T-cell (primary cell): ENCODE measurements at regions of chr6 and their contacts with region 1.

Region 1: DNA sequence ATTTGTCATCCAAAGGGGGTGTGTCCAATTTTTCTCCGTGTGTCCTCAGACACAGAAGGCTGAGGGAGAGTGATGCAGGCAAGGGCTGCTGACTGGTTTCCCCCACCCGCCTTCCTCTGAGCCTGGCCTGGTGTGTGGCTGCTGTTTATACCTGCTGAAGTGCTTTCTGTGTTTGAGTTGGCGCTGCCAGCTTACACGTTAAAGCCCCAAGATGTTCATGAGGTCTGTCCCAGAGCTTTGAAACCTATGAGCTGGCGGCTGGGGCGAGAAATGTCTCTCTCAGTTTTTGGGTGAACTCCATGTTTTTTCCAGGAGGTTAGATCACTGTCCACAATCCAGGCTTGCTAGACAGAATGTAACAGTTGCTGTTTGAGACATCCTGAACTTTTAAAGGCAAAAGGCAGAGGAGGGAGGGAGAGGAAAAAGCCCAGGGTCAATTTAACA is 69.0 kb upstream of the CCN2 start:
- DNase-seq: no peak
- ATAC-seq: no peak
- H3K4me3 ChIP-seq: no peak overlapping the region
- H3K4me3 Mint-ChIP-seq: no peak overlapping the region
- H3K27ac ChIP-seq: no peak overlapping the region
- H3K27ac Mint-ChIP-seq: no peak overlapping the region
- H3K4me1 ChIP-seq: no peaks in the 10 kb centered on the region
- H3K4me1 Mint-ChIP-seq: no peaks in the 10 kb centered on the region
- H3K27me3 ChIP-seq: no peaks in the 10 kb centered on the region
- H3K27me3 Mint-ChIP-seq: peaks cover 0 to 12% of the 10 kb centered on the region in 2 donors

Region 2: DNA sequence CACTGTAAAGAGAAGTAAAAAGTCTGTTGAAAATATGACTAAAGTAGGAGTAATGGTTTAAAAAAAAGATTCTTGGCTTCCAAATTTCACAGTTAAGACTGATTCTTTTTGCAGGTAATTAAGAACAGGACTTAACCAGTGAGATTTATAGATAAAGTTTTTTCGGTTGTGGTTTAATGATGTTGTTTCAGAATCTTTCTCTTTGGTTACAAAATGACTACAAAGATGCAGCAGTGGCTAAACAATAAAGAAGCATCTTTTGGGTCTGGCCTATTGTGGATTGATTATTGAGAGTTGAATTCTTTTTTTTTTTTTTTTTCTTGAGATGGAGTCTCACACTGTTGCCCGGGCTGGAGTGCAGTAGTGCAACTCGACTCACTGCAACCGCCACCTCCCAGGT is 775.2 kb before region 1 on chr6:
- CTCF ChIA-PET with region 1: interaction called in 1 of 2 experiments, 11 read pairs
- POLR2A ChIA-PET with region 1: no interaction called
- DNase-seq: no peak
- ATAC-seq: no peak
- H3K4me3 ChIP-seq: no peak overlapping the region
- H3K4me3 Mint-ChIP-seq: no peak overlapping the region
- H3K27ac ChIP-seq: no peak overlapping the region
- H3K27ac Mint-ChIP-seq: peak overlapping the region; percentile 55 to 63
- H3K4me1 ChIP-seq: peaks cover 0 to 4% of the 10 kb centered on the region in 2 experiments
- H3K4me1 Mint-ChIP-seq: peaks cover 23 to 48% (median 42%) of the 10 kb centered on the region in 3 donors
- H3K27me3 ChIP-seq: no peaks in the 10 kb centered on the region
- H3K27me3 Mint-ChIP-seq: no peaks in the 10 kb centered on the region

Region 3: GRCh38 chr6:132052096-132052495 is 31.9 kb after region 1 on chr6:
- CTCF ChIA-PET with region 1: no interaction called
- POLR2A ChIA-PET with region 1: interaction called in 1 of 2 experiments, 19 read pairs
- DNase-seq: no peak
- ATAC-seq: no peak
- H3K4me3 ChIP-seq: no peak overlapping the region
- H3K4me3 Mint-ChIP-seq: no peak overlapping the region
- H3K27ac ChIP-seq: no peak overlapping the region
- H3K27ac Mint-ChIP-seq: no peak overlapping the region
- H3K4me1 ChIP-seq: no peaks in the 10 kb centered on the region
- H3K4me1 Mint-ChIP-seq: no peaks in the 10 kb centered on the region
- H3K27me3 ChIP-seq: peaks cover 0 to 2% of the 10 kb centered on the region in 2 experiments
- H3K27me3 Mint-ChIP-seq: no peaks in the 10 kb centered on the region